ENCODE measurements at regions of chr14 and their contacts with region 1.

Region 1: GRCh38 chr14:70622111-70622712 is 19.5 kb upstream of the TTC9 start:
- DNase-seq: peak; percentile 66
- H3K4me3 ChIP-seq: no peak overlapping the region
- H3K27ac ChIP-seq: no peak overlapping the region
- H3K4me1 ChIP-seq: no peaks in the 10 kb centered on the region
- H3K27me3 ChIP-seq: no peaks in the 10 kb centered on the region
- CTCF ChIP-seq: peak; percentile 32 to 97 (median 82)
- POLR2A ChIP-seq: no peak

Region 2: DNA sequence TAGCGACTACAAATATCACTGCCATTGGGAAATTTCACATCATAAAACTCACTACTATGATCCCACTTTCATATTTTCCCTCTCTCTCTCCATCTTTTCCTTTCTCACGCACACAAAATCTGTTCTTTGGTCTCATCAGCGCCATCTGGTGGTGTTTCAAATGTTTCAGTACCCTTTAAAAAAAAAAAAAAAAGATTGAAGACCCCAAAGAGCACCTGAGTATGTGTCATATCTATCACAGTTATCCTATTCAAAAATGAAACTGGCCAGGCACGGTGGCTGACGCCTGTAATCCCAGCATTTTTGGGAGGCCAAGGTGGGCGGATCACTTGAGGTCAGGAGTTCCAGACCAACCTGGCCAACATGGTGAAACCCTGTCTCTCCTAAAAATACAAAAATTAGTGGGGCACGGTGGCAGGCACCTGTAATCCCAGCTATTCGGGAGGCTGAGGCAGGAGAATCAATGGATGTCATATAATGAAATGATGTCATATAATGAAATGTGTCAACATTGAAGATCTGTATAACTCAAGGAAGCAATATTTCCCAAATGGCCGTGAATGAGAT is 91.9 kb after region 1 on chr14:
- intact Hi-C with region 1: loop called (anchors 5 kb)
- DNase-seq: peak; percentile 51 to 57
- H3K4me3 ChIP-seq: no peak overlapping the region
- H3K27ac ChIP-seq: peak overlapping the region; percentile 66 to 91 (median 83)
- H3K4me1 ChIP-seq: peaks cover 25 to 45% of the 10 kb centered on the region in 2 donors
- H3K27me3 ChIP-seq: no peaks in the 10 kb centered on the region
- CTCF ChIP-seq: peak; percentile 47 to 94 (median 67)
- POLR2A ChIP-seq: no peak

Region 3: GRCh38 chr14:70816525-70816924 is 194.3 kb after region 1 on chr14:
- intact Hi-C with region 1: loop called (anchors 5 kb)
- DNase-seq: no peak
- H3K4me3 ChIP-seq: no peak overlapping the region
- H3K27ac ChIP-seq: no peak overlapping the region
- H3K4me1 ChIP-seq: peaks cover 4 to 7% of the 10 kb centered on the region in 2 donors
- H3K27me3 ChIP-seq: no peaks in the 10 kb centered on the region
- CTCF ChIP-seq: no peak
- POLR2A ChIP-seq: no peak

Region 4: GRCh38 chr14:70972107-70972976 is 350.1 kb after region 1 on chr14:
- intact Hi-C with region 1: loop called (anchors 10 kb)
- DNase-seq: peak; percentile 85 to 91
- H3K4me3 ChIP-seq: no peak overlapping the region
- H3K27ac ChIP-seq: no peak overlapping the region
- H3K4me1 ChIP-seq: no peaks in the 10 kb centered on the region
- H3K27me3 ChIP-seq: no peaks in the 10 kb centered on the region
- CTCF ChIP-seq: peak; percentile 84 to 96 (median 86)
- POLR2A ChIP-seq: no peak

Measured in thyroid gland (tissue), 4 donors.